CD4-positive, alpha-beta T cell (primary cell): ENCODE measurements at regions of chr11 and their contacts with region 1.

Region 1: GRCh38 chr11:88301488-88302140 is 35.9 kb downstream of the CTSC start:
- DNase-seq: peak in 3 of 14 experiments; percentile 43 to 69 (median 58)
- ATAC-seq: peak; percentile 39
- H3K4me3 ChIP-seq: peak overlapping the region; percentile 13
- H3K4me3 Mint-ChIP-seq: peak overlapping the region; percentile 45
- H3K27ac ChIP-seq: peak overlapping the region in 1 of 2 donors; percentile 38
- H3K27ac Mint-ChIP-seq: peak overlapping the region; percentile 57
- H3K4me1 ChIP-seq: peaks cover 8% of the 10 kb centered on the region
- H3K4me1 Mint-ChIP-seq: peaks cover 42% of the 10 kb centered on the region
- H3K27me3 ChIP-seq: no peaks in the 10 kb centered on the region
- H3K27me3 Mint-ChIP-seq: no peaks in the 10 kb centered on the region
- CTCF ChIP-seq: no peak

Region 2: GRCh38 chr11:88357323-88358039 is 55.9 kb after region 1 on chr11:
- CTCF ChIA-PET with region 1: no interaction called
- POLR2A ChIA-PET with region 1: no interaction called
- intact Hi-C with region 1: loop called in 1 of 2 experiments (anchors 10 kb)
- DNase-seq: no peak
- ATAC-seq: no peak
- H3K4me3 ChIP-seq: no peak overlapping the region
- H3K4me3 Mint-ChIP-seq: peak overlapping the region; percentile 9
- H3K27ac ChIP-seq: no peak overlapping the region
- H3K27ac Mint-ChIP-seq: peak overlapping the region; percentile 3
- H3K4me1 ChIP-seq: peaks cover 12% of the 10 kb centered on the region
- H3K4me1 Mint-ChIP-seq: peaks cover 49% of the 10 kb centered on the region
- H3K27me3 ChIP-seq: no peaks in the 10 kb centered on the region
- H3K27me3 Mint-ChIP-seq: no peaks in the 10 kb centered on the region
- CTCF ChIP-seq: no peak